ENCODE measurements at regions of chr2 and their contacts with region 1.

Region 1: DNA sequence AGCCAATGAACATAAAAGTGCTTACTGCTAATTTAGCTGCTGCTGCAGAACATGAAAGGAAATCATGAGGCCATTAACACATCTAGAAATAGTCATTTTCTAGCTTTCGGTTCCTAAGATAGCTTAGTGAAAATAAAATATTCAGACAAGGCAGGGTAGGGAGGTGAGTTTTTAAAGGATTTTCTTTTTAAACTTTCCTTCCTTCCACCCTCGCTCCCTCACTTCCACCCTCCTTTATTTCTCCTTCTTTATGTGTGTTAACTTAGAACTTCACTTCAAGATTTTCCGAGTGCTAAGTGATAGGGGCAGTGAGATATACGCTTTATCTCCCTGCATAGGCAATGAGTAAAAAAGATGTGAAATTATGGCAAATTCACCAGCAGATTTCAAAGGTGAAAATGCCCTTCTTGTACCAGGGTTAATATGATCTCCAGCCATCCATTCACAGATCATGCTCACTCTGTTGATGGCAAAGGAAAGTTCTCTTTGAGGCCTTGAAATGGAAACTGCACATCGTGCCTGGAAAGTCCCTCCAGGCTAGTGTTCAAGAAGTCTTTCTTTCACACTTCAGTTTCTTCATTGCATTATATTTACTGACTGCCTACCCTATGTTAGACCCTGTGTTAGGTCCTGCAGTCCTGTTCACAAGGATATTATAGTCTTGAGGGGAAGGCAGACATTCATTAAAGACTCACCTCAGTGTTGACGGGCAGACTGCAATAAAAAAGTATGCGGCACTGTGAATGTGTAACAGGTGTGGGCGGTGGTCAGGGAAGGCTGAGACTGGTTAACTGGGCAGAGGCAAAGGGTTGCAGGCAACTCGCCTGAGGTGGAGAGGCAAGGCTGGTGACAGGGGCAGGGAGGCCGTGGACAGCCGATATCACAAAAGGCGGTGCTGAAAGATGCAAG is 200.8 kb downstream of the PLCL1 start:
- DNase-seq: peak; percentile 87
- ATAC-seq: peak; percentile 86
- H3K4me3 ChIP-seq: peak overlapping the region; percentile 20; the same call in 1 of the 2 replicates
- H3K27ac ChIP-seq: peak overlapping the region; percentile 99
- H3K4me1 ChIP-seq: peaks cover 39% of the 10 kb centered on the region
- H3K27me3 ChIP-seq: no peaks in the 10 kb centered on the region
- CTCF ChIP-seq: no peak
- EP300 ChIP-seq: peak; percentile 72 to 89
- POLR2A ChIP-seq: no peak
- RAD21 ChIP-seq: peak; percentile 13; the same call in 1 of the 2 replicates

Region 2: GRCh38 chr2:197461057-197461456 is 544.1 kb before region 1 on chr2:
- CTCF ChIA-PET with region 1: no interaction called
- POLR2A ChIA-PET with region 1: no interaction called
- RAD21 ChIA-PET with region 1: no interaction called
- SMC1A ChIA-PET with region 1: no interaction called
- in situ Hi-C with region 1: no loop called
- intact Hi-C with region 1: no loop called
- DNase-seq: no peak
- ATAC-seq: no peak
- H3K4me3 ChIP-seq: no peak overlapping the region
- H3K27ac ChIP-seq: no peak overlapping the region
- H3K4me1 ChIP-seq: no peaks in the 10 kb centered on the region
- H3K27me3 ChIP-seq: no peaks in the 10 kb centered on the region
- CTCF ChIP-seq: no peak
- EP300 ChIP-seq: no peak
- POLR2A ChIP-seq: no peak
- RAD21 ChIP-seq: no peak

Region 3: GRCh38 chr2:197838036-197838435 is 167.1 kb before region 1 on chr2:
- CTCF ChIA-PET with region 1: interaction called, 4 read pairs
- POLR2A ChIA-PET with region 1: no interaction called
- RAD21 ChIA-PET with region 1: interaction called, 10 read pairs
- SMC1A ChIA-PET with region 1: interaction called, 6 read pairs
- in situ Hi-C with region 1: no loop called
- intact Hi-C with region 1: no loop called
- DNase-seq: peak; percentile 30
- ATAC-seq: peak; percentile 97
- H3K4me3 ChIP-seq: no peak overlapping the region
- H3K27ac ChIP-seq: no peak overlapping the region
- H3K4me1 ChIP-seq: no peaks in the 10 kb centered on the region
- H3K27me3 ChIP-seq: no peaks in the 10 kb centered on the region
- CTCF ChIP-seq: no peak
- EP300 ChIP-seq: no peak
- POLR2A ChIP-seq: no peak
- RAD21 ChIP-seq: no peak

Region 4: GRCh38 chr2:197992482-197993133 is 12.6 kb before region 1 on chr2:
- CTCF ChIA-PET with region 1: interaction called, 5 read pairs
- POLR2A ChIA-PET with region 1: interaction called, 12 read pairs
- RAD21 ChIA-PET with region 1: interaction called, 30 read pairs
- SMC1A ChIA-PET with region 1: interaction called, 168 read pairs
- in situ Hi-C with region 1: no loop called
- intact Hi-C with region 1: loop called (anchors 1 kb)
- DNase-seq: no peak
- ATAC-seq: peak; percentile 98
- H3K4me3 ChIP-seq: no peak overlapping the region
- H3K27ac ChIP-seq: peak overlapping the region; percentile 43; the same call in 1 of the 2 replicates
- H3K4me1 ChIP-seq: peaks cover 16% of the 10 kb centered on the region
- H3K27me3 ChIP-seq: no peaks in the 10 kb centered on the region
- CTCF ChIP-seq: no peak
- EP300 ChIP-seq: 0 out of 4 replicates have a peak, but pooled peaks of 1 of the 2 experiments have one; percentile 9
- POLR2A ChIP-seq: no peak
- RAD21 ChIP-seq: no peak

Region 5: GRCh38 chr2:198028955-198029354 is 23.8 kb after region 1 on chr2:
- CTCF ChIA-PET with region 1: no interaction called
- POLR2A ChIA-PET with region 1: no interaction called
- RAD21 ChIA-PET with region 1: interaction called, 3 read pairs
- SMC1A ChIA-PET with region 1: interaction called, 11 read pairs
- in situ Hi-C with region 1: no loop called
- intact Hi-C with region 1: no loop called
- DNase-seq: no peak
- ATAC-seq: no peak
- H3K4me3 ChIP-seq: no peak overlapping the region
- H3K27ac ChIP-seq: no peak overlapping the region
- H3K4me1 ChIP-seq: no peaks in the 10 kb centered on the region
- H3K27me3 ChIP-seq: no peaks in the 10 kb centered on the region; a peak in 1 of 4 replicates
- CTCF ChIP-seq: no peak
- EP300 ChIP-seq: no peak
- POLR2A ChIP-seq: no peak
- RAD21 ChIP-seq: no peak

Region 6: GRCh38 chr2:198042189-198042588 is 37.0 kb after region 1 on chr2:
- CTCF ChIA-PET with region 1: interaction called, 3 read pairs
- POLR2A ChIA-PET with region 1: interaction called, 6 read pairs
- RAD21 ChIA-PET with region 1: interaction called, 13 read pairs
- SMC1A ChIA-PET with region 1: interaction called, 110 read pairs
- in situ Hi-C with region 1: no loop called
- intact Hi-C with region 1: loop called (anchors 5 kb)
- DNase-seq: no peak
- ATAC-seq: peak; percentile 71
- H3K4me3 ChIP-seq: no peak overlapping the region
- H3K27ac ChIP-seq: peak overlapping the region; percentile 14; the same call in 1 of the 2 replicates
- H3K4me1 ChIP-seq: no peaks in the 10 kb centered on the region
- H3K27me3 ChIP-seq: no peaks in the 10 kb centered on the region
- CTCF ChIP-seq: no peak
- EP300 ChIP-seq: peak in 1 of 2 experiments; percentile 35; a peak in 1 of 4 replicates
- POLR2A ChIP-seq: no peak
- RAD21 ChIP-seq: no peak

Region 7: GRCh38 chr2:198098918-198099317 is 93.7 kb after region 1 on chr2:
- CTCF ChIA-PET with region 1: no interaction called
- POLR2A ChIA-PET with region 1: no interaction called
- RAD21 ChIA-PET with region 1: interaction called, 27 read pairs
- SMC1A ChIA-PET with region 1: interaction called, 13 read pairs
- in situ Hi-C with region 1: no loop called
- intact Hi-C with region 1: no loop called
- DNase-seq: no peak
- ATAC-seq: no peak
- H3K4me3 ChIP-seq: no peak overlapping the region
- H3K27ac ChIP-seq: no peak overlapping the region
- H3K4me1 ChIP-seq: peaks cover 2% of the 10 kb centered on the region; the same call in 1 of the 2 replicates
- H3K27me3 ChIP-seq: no peaks in the 10 kb centered on the region
- CTCF ChIP-seq: no peak
- EP300 ChIP-seq: no peak
- POLR2A ChIP-seq: no peak
- RAD21 ChIP-seq: no peak

Region 8: GRCh38 chr2:198259496-198259895 is 254.3 kb after region 1 on chr2:
- CTCF ChIA-PET with region 1: no interaction called
- POLR2A ChIA-PET with region 1: no interaction called
- RAD21 ChIA-PET with region 1: no interaction called
- SMC1A ChIA-PET with region 1: no interaction called
- in situ Hi-C with region 1: no loop called
- intact Hi-C with region 1: no loop called
- DNase-seq: no peak
- ATAC-seq: no peak
- H3K4me3 ChIP-seq: no peak overlapping the region
- H3K27ac ChIP-seq: no peak overlapping the region
- H3K4me1 ChIP-seq: no peaks in the 10 kb centered on the region
- H3K27me3 ChIP-seq: peaks cover 0 to 4% of the 10 kb centered on the region in 2 experiments; a peak in 2 of 4 replicates
- CTCF ChIP-seq: no peak
- EP300 ChIP-seq: no peak
- POLR2A ChIP-seq: no peak
- RAD21 ChIP-seq: no peak